ENCODE measurements at regions of chr14 and their contacts with region 1.

Region 1: GRCh38 chr14:24299255-24300195 is at the starts of genes DHRS1 and NOP9:
- DNase-seq: peak; percentile 90
- H3K4me3 ChIP-seq: peak within 1 kb of the TSS; percentile 79 to 85 (median 82)
- H3K27ac ChIP-seq: peak within 1 kb of the TSS; percentile 74
- H3K4me1 ChIP-seq: peaks cover 22% of the 10 kb centered on the region
- H3K27me3 ChIP-seq: no peaks in the 10 kb centered on the region
- CTCF ChIP-seq: no peak
- POLR2A ChIP-seq: peak; percentile 76
- total RNA-seq, gene DHRS1: 18.0 and 20.0 TPM in 2 replicates
- total RNA-seq, gene NOP9: 30.9 and 31.0 TPM in 2 replicates

Region 2: DNA sequence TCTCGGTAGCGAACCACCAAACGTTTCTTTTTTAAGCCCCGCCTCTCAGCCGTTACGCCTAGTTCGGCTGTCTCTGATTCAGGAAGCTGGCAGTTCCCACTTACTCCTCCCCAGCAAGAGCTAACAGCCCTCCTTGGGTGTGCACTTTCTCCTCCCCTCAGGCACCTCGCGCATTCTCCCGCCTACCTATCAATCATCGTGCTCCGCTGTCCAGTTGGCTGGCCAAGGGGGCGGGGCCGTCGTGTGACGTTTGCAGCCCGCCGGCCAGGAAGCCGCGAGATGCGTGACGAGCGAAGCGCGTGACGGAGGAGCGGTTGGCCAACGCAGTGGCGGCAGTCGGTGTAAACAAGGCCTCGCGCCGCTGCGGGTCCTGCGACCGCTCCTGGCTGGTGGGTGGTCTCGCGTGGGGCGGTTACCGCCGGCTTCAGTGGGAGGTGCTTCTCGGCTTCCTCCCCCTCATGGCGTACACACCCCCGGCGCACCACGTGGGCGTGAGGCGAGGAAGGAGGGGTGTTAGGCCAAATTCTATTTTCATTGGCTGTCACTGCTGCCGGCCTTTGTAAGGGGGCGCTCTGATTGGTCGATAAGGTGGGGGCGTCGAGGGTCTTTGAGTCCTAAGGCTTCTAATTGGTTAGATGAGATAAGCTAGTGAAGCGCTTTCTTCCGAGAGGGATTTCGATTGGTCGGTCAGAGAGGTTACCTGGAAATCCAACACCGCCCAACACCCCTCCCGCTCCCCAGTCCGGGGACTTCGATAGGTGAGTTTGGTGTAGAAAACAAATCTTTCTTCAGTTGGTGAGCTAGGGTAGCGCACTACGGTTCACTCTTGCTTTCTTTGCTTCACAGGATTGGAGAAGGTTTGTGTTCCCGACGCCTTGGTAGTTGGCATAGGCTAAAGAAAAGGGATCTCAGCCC is 184.7 kb before region 1 on chr14 and contains the starts of genes DCAF11 and NRL:
- CTCF ChIA-PET with region 1: interaction called, 4 read pairs
- POLR2A ChIA-PET with region 1: no interaction called
- dilution Hi-C with region 1: no loop called
- intact Hi-C with region 1: loop called (anchors 1 kb)
- DNase-seq: peak; percentile 100
- H3K4me3 ChIP-seq: peak within 1 kb of the TSS; percentile 46 to 92 (median 84)
- H3K27ac ChIP-seq: peak within 1 kb of the TSS; percentile 88
- H3K4me1 ChIP-seq: peaks cover 13% of the 10 kb centered on the region
- H3K27me3 ChIP-seq: no peaks in the 10 kb centered on the region
- CTCF ChIP-seq: no peak
- POLR2A ChIP-seq: peak; percentile 39
- total RNA-seq, gene DCAF11: 32.1 and 38.5 TPM in 2 replicates
- total RNA-seq, gene NRL: 0.62 and 0.71 TPM in 2 replicates

Region 3: DNA sequence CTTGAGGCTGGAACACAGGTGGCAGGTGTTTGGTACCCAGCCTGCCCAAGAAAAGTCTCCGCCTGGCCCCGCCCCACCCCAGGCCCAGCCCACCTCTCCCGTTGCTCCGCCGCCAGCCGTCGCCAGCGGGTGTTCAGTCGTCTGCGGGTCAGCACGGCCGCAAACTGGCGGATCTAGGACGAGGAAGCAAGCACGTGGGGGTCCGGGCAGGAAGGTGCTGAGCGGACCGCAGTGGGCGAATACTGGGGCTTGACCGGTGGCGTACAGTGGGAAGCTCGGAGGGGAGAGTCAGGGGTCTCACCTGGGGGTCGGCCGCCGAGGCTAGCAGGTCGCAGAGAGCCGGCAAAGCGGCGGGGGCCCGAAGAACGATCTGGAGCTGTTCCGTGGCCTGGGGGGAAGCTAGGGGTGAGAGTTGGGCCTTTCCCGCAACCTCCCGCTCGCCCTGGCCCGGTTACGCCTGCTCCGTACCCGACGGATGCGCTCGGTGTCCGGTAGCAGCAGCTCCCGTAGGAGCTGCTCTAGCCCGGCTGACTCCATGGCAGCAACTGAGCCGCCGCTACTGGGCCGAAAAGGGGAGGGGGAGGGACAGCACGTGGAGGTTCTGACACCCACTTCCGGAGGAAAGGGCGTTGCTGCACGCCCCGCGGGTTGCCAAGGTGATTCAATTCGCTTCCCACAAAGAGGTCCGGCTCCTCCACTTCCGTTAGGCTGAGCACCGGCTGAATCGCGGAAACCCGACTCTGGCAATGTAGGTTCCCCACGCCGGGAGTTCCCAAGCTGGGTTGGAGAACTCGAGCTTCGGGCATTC is 111.1 kb before region 1 on chr14 and contains the start of gene IPO4:
- CTCF ChIA-PET with region 1: interaction called, 19 read pairs
- POLR2A ChIA-PET with region 1: no interaction called
- dilution Hi-C with region 1: no loop called
- intact Hi-C with region 1: loop called (anchors 2 kb)
- DNase-seq: peak; percentile 94
- H3K4me3 ChIP-seq: peak within 1 kb of the TSS; percentile 31 to 65 (median 37)
- H3K27ac ChIP-seq: peak within 1 kb of the TSS; percentile 45
- H3K4me1 ChIP-seq: peaks cover 6% of the 10 kb centered on the region
- H3K27me3 ChIP-seq: no peaks in the 10 kb centered on the region
- CTCF ChIP-seq: no peak
- POLR2A ChIP-seq: peak; percentile 94
- total RNA-seq, gene IPO4: 52.6 and 66.5 TPM in 2 replicates

Region 4: GRCh38 chr14:24224618-24225071 is 74.9 kb before region 1 on chr14:
- CTCF ChIA-PET with region 1: interaction called, 11 read pairs
- POLR2A ChIA-PET with region 1: no interaction called
- dilution Hi-C with region 1: no loop called
- intact Hi-C with region 1: no loop called
- DNase-seq: peak; percentile 95
- H3K4me3 ChIP-seq: no peak overlapping the region
- H3K27ac ChIP-seq: peak overlapping the region; percentile 99
- H3K4me1 ChIP-seq: peaks cover 28% of the 10 kb centered on the region
- H3K27me3 ChIP-seq: no peaks in the 10 kb centered on the region
- CTCF ChIP-seq: no peak
- POLR2A ChIP-seq: no peak

Region 5: GRCh38 chr14:24279301-24280186 is 20.0 kb before region 1 on chr14:
- CTCF ChIA-PET with region 1: interaction called, 27 read pairs
- POLR2A ChIA-PET with region 1: no interaction called
- dilution Hi-C with region 1: no loop called
- intact Hi-C with region 1: no loop called
- DNase-seq: no peak
- H3K4me3 ChIP-seq: no peak overlapping the region
- H3K27ac ChIP-seq: no peak overlapping the region
- H3K4me1 ChIP-seq: no peaks in the 10 kb centered on the region
- H3K27me3 ChIP-seq: no peaks in the 10 kb centered on the region
- CTCF ChIP-seq: peak in 1 of 2 donors; percentile 33
- POLR2A ChIP-seq: no peak

Region 6: DNA sequence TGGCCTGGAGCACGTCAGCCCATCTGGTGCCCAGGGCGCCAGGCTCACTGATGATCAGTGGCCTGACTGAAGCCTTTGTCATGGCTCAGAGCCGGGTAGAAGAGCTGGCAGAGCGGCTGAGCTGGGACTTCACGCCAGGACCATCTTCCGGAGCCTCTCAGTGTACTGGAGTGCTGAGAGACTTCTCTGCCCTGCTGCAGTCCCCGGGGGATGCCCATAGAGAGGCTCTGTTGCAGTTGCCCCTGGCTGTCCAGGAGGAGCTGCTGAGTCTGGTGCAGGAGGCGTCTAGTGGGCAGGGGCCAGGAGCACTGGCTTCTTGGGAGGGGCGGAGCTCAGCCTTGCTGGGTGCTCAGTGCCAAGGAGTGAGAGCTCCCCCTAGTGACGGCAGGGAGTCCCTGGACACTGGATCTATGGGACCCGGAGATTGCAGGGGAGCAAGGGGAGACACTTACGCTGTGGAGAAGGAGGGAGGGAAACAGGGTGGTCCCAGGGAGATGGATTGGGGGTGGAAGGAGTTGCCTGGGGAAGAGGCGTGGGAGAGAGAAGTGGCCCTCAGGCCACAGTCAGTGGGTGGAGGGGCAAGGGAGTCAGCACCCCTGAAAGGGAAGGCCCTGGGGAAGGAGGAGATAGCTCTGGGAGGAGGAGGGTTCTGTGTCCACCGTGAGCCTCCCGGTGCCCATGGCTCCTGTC is 132.2 kb after region 1 on chr14:
- CTCF ChIA-PET with region 1: interaction called, 16 read pairs
- POLR2A ChIA-PET with region 1: no interaction called
- dilution Hi-C with region 1: no loop called
- intact Hi-C with region 1: no loop called
- DNase-seq: peak; percentile 92
- H3K4me3 ChIP-seq: peak overlapping the region in 2 of 3 experiments; percentile 78 to 89
- H3K27ac ChIP-seq: peak overlapping the region; percentile 94
- H3K4me1 ChIP-seq: peaks cover 46% of the 10 kb centered on the region
- H3K27me3 ChIP-seq: no peaks in the 10 kb centered on the region
- CTCF ChIP-seq: peak; percentile 95 to 97
- POLR2A ChIP-seq: no peak